ENCODE measurements at regions of chr2 and their contacts with region 1.

Region 1: DNA sequence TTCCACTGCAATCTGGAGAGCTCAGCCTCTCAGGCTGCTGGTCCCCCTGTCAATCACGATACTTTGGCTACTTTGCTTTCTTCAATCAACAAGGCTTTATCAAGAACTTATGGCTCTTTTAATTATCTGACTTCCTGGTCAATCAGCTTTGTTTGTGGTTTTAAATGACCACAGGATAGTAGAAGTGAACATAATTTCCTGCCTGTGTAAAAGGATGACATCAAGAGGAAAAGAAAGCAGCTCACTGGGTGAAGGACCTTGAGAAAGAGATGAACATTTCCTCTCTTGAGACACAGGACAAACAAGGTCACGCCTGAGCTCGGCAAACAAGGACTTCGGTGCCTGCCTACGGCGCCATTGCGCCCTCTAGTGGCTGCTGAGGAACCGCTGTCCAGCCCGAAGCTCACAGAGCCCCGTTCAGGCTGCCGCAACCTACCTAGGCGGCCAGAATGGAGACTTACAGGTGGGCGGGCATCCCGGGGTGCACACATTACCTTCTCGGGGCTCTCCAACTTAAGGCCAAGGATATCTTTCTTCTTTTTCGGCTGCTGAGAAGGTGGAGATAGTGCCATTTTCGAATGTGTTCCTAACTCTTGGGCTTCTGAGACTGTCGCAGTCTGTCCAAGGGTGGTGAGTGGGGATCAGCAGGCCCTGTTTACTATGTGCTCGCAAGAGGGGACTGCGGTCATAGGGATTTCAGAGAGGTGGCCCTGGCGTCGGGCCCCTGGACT is 54.0 kb downstream of the IL1RL2 start:
- DNase-seq: peak; percentile 91
- ATAC-seq: peak; percentile 97
- H3K4me3 ChIP-seq: no peak overlapping the region
- H3K27ac ChIP-seq: peak overlapping the region; percentile 54
- H3K4me1 ChIP-seq: peaks cover 19% of the 10 kb centered on the region
- H3K27me3 ChIP-seq: no peaks in the 10 kb centered on the region
- CTCF ChIP-seq: peak; percentile 97

Region 2: DNA sequence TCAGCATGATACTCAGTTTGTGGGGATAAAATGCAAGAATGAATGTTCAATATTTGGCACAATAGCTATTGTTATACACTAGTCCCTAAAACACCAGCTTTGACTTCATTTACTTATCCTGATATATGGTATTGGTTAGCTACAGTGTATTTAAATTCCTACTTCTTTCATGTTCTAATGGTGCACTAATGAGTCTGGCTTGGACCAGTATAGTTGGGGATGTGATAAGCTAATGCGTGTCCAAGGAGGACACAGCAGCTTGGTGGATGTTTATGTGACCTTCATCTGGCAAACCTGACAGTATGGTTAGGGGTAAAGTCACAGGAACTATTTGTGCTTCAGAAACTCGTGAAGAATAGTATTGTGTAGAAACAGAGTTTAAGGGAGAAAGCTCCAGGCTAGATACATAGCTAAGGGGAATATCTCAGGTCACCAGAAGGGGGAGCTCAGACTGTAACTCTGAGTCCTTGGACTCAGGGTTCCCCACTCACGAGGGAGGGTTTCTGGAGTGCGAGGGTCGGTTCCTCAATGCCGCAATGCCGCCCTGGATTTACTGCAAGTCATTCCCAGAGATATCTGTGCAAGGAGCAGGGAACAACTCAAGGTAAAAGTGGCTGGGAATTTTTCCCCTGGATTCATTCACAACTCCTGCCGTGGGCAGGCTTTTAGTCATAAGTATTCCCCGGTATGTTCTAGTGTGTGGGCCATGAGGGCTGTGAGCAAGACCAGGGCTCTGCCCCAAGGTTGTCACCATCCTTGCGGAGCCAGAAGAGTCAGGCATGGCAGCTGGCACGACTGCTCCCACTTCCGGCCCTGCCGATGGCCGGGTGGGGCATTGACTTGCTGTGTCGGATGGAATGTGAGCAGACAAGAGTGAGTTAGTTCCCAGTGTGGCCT is 234.6 kb before region 1 on chr2:
- CTCF ChIA-PET with region 1: interaction called, 17 read pairs
- POLR2A ChIA-PET with region 1: no interaction called
- intact Hi-C with region 1: no loop called
- DNase-seq: peak; percentile 63
- ATAC-seq: peak; percentile 78
- H3K4me3 ChIP-seq: no peak overlapping the region
- H3K27ac ChIP-seq: no peak overlapping the region
- H3K4me1 ChIP-seq: peaks cover 15% of the 10 kb centered on the region
- H3K27me3 ChIP-seq: no peaks in the 10 kb centered on the region
- CTCF ChIP-seq: peak; percentile 83

Region 3: GRCh38 chr2:102147935-102148334 is 92.9 kb before region 1 on chr2:
- CTCF ChIA-PET with region 1: no interaction called
- POLR2A ChIA-PET with region 1: no interaction called
- intact Hi-C with region 1: no loop called
- DNase-seq: no peak
- ATAC-seq: no peak
- H3K4me3 ChIP-seq: no peak overlapping the region
- H3K27ac ChIP-seq: no peak overlapping the region
- H3K4me1 ChIP-seq: peaks cover 4% of the 10 kb centered on the region; the same call in 1 of the 2 replicates
- H3K27me3 ChIP-seq: no peaks in the 10 kb centered on the region
- CTCF ChIP-seq: no peak

Region 4: DNA sequence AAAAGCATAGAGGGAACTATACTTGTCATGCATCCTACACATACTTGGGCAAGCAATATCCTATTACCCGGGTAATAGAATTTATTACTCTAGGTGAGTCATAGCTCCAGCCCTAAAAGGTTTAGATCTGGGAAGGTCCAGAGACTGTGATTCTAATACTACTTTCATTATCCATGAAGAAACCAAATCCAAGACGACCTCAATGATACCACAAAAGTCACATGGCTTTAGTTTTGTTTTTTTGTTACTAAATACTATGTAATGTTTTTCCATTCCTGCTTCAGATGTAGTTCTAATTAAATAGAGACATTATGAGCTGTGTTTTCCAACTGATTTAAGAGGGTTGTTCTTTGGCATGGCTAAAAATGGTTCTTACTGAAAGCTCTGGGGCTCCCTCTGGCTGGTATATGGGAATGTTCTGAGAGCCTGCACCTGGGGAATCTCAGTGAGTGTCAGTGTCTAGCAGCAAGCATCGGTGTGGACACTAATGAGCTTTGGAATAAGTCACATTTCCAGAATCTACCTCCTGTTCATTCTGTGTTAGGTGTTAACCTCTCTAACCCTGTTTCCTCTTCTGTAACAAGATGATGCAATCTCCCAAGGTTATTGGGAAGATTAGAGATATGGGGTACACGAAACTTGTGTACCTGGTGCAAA is 74.5 kb before region 1 on chr2:
- CTCF ChIA-PET with region 1: interaction called, 26 read pairs
- POLR2A ChIA-PET with region 1: interaction called, 3 read pairs
- intact Hi-C with region 1: loop called (anchors 5 kb)
- DNase-seq: peak; percentile 65
- ATAC-seq: peak; percentile 96
- H3K4me3 ChIP-seq: no peak overlapping the region
- H3K27ac ChIP-seq: 0 out of 2 replicates have a peak overlapping the region, but pooled peaks have one; percentile 6
- H3K4me1 ChIP-seq: peaks cover 15% of the 10 kb centered on the region
- H3K27me3 ChIP-seq: no peaks in the 10 kb centered on the region
- CTCF ChIP-seq: peak; percentile 79

Region 5: GRCh38 chr2:102185347-102185746 is 55.5 kb before region 1 on chr2:
- CTCF ChIA-PET with region 1: no interaction called
- POLR2A ChIA-PET with region 1: interaction called, 3 read pairs
- intact Hi-C with region 1: loop called (anchors 1 kb)
- DNase-seq: peak; percentile 40
- ATAC-seq: no peak
- H3K4me3 ChIP-seq: no peak overlapping the region
- H3K27ac ChIP-seq: no peak overlapping the region
- H3K4me1 ChIP-seq: no peaks in the 10 kb centered on the region
- H3K27me3 ChIP-seq: no peaks in the 10 kb centered on the region
- CTCF ChIP-seq: peak; percentile 71

Region 6: DNA sequence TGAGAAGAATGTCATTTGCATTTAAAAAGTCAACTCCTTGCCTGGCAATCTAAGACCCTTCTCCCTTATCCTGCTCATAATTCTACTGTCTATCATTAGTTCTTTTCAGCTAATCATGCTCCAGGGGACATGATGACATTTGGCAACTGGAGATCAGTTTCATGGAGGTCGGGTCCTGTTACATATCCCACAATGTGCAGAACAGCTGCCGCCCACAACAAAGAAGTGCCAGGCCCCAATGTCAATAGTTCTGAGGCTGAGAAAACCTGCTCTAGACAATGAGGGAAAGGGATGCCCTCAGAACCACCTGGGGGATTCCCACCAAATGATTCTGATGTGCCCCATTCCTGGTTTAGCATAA is 17.2 kb after region 1 on chr2:
- CTCF ChIA-PET with region 1: no interaction called
- POLR2A ChIA-PET with region 1: no interaction called
- intact Hi-C with region 1: no loop called
- DNase-seq: no peak
- ATAC-seq: no peak; the same call in 1 of the 2 replicates
- H3K4me3 ChIP-seq: no peak overlapping the region
- H3K27ac ChIP-seq: peak overlapping the region; percentile 49
- H3K4me1 ChIP-seq: peaks cover 19% of the 10 kb centered on the region
- H3K27me3 ChIP-seq: no peaks in the 10 kb centered on the region
- CTCF ChIP-seq: no peak

Region 7: GRCh38 chr2:102657770-102658169 is 417.0 kb after region 1 on chr2:
- CTCF ChIA-PET with region 1: no interaction called
- POLR2A ChIA-PET with region 1: no interaction called
- intact Hi-C with region 1: no loop called
- DNase-seq: peak; percentile 65
- ATAC-seq: no peak
- H3K4me3 ChIP-seq: no peak overlapping the region
- H3K27ac ChIP-seq: peak overlapping the region; percentile 49
- H3K4me1 ChIP-seq: peaks cover 38% of the 10 kb centered on the region
- H3K27me3 ChIP-seq: no peaks in the 10 kb centered on the region
- CTCF ChIP-seq: no peak

Measured in PC-3 (cell line).